ENCODE measurements at regions of chr2 and their contacts with region 1.

Region 1: DNA sequence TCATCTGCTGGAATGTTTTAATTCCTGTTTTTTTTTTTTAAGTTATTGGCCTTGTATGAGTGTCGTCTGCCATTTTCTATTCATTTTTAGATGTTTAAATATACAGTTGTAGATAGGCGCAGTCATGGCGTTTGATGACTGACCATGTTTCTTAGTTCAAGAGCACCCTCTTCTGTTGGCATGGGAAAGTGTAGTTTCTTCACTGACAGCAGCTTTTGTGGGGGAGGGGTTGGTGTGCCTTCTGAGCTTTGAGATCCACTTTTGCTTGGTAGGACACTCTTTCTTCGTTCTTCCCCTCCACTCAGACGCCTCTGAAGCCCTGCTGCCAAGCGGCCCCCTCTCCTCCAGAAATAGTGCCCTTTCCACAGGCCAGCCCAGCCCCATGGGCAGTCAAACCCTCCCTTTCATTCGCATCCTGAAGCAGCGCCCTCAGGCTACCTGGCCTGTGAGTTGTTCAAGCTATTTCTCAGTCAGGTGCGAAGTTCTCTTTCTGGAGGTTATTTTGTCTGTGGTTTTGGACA is 492.0 kb downstream of the TNS1 start:
- DNase-seq: peak; percentile 74
- H3K4me3 ChIP-seq: no peak overlapping the region
- H3K27ac ChIP-seq: no peak overlapping the region
- H3K4me1 ChIP-seq: no peaks in the 10 kb centered on the region
- H3K27me3 ChIP-seq: no peaks in the 10 kb centered on the region
- CTCF ChIP-seq: peak; percentile 64 to 65
- POLR2A ChIP-seq: no peak

Region 2: DNA sequence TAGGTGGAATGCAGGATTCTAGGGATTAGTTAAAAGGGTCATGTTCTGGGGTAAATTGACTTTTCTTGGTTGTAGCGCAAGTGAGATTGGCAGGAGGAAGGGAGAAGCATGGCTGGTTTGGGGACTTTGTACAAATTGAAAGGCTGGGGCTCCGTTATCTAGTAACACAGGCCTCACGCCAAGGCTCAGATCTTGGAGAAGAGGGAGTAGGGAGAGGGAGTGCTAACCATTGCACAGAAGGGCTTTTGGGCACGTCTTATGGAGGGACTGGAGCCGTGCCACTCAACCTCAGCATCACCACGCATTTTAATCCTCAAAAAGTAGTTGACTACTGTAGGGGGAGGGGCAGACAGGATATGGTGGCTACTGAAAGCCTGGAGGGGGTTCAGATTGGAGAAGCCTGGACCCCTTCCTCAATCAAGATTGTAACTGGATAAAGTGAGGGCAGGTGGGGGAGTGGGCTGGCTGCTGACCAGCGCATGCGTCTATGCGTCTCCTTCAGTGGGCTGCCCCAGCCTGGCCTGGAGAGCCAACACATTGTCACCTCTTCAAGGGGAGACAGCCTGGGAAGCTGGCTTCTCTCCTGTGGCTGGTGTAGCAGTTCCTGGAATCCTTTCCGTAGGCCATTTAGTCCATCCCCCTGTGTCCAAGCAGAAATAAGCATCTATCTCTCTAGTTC is 829.7 kb before region 1 on chr2:
- CTCF ChIA-PET with region 1: interaction called, 41 read pairs
- POLR2A ChIA-PET with region 1: no interaction called
- dilution Hi-C with region 1: no loop called
- intact Hi-C with region 1: loop called (anchors 1 kb)
- DNase-seq: no peak
- H3K4me3 ChIP-seq: no peak overlapping the region
- H3K27ac ChIP-seq: no peak overlapping the region
- H3K4me1 ChIP-seq: no peaks in the 10 kb centered on the region
- H3K27me3 ChIP-seq: peaks cover 0 to 13% of the 10 kb centered on the region in 2 experiments
- CTCF ChIP-seq: no peak
- POLR2A ChIP-seq: no peak

Region 3: DNA sequence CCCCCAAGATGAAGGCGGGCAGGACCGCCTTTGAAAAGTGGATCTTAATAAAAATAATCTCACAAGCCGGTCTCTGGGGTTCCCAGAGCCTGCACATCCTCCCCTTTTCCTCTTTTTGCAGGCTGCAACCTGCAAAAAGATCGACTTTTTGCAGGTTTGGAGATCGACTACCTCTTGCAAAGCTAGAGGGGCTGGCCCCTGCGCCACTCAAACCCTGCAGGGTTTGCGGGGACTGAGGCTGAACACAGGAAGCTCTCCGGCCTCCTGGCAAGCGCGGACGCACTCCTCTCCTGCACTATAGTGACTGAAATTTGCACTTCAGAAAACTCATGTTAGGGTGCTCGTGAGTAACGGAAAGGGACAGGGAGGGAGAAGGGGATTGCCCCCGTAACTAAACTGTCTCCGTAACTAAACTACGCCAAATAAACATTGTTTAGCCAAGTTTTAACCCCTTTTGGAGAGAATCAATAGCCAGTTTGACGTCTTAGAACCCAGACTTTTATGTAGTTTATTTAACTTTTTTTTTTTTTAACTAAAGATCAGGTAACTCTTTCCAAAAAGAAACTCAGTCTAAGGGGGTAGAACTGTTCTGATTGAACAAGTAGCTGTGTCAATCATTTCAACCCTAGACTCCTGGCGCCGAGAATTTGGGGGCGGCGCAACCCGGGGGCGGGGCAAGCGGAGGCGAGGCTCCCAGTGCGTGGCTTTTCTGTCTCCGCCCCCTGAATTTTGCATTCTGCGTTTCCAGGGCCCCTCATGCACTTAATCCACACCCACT is 818.0 kb before region 1 on chr2:
- CTCF ChIA-PET with region 1: interaction called, 10 read pairs
- POLR2A ChIA-PET with region 1: no interaction called
- dilution Hi-C with region 1: no loop called
- intact Hi-C with region 1: loop called (anchors 1 kb)
- DNase-seq: peak; percentile 46
- H3K4me3 ChIP-seq: peak overlapping the region; percentile 31 to 55 (median 48)
- H3K27ac ChIP-seq: no peak overlapping the region
- H3K4me1 ChIP-seq: peaks cover 20% of the 10 kb centered on the region
- H3K27me3 ChIP-seq: peaks cover 73 to 76% of the 10 kb centered on the region in 2 experiments
- CTCF ChIP-seq: no peak
- POLR2A ChIP-seq: no peak

Region 4: GRCh38 chr2:216777650-216778273 is 733.1 kb before region 1 on chr2:
- CTCF ChIA-PET with region 1: interaction called, 4 read pairs
- POLR2A ChIA-PET with region 1: no interaction called
- dilution Hi-C with region 1: no loop called
- intact Hi-C with region 1: loop called (anchors 1 kb)
- DNase-seq: peak; percentile 33
- H3K4me3 ChIP-seq: no peak overlapping the region
- H3K27ac ChIP-seq: no peak overlapping the region
- H3K4me1 ChIP-seq: no peaks in the 10 kb centered on the region
- H3K27me3 ChIP-seq: no peaks in the 10 kb centered on the region
- CTCF ChIP-seq: peak; percentile 71 to 80
- POLR2A ChIP-seq: no peak

Region 5: GRCh38 chr2:217040099-217040498 is 470.7 kb before region 1 on chr2:
- CTCF ChIA-PET with region 1: interaction called, 6 read pairs
- POLR2A ChIA-PET with region 1: no interaction called
- dilution Hi-C with region 1: no loop called
- intact Hi-C with region 1: loop called (anchors 5 kb)
- DNase-seq: no peak
- H3K4me3 ChIP-seq: no peak overlapping the region
- H3K27ac ChIP-seq: no peak overlapping the region
- H3K4me1 ChIP-seq: no peaks in the 10 kb centered on the region
- H3K27me3 ChIP-seq: peaks cover 3 to 6% of the 10 kb centered on the region in 2 experiments
- CTCF ChIP-seq: no peak
- POLR2A ChIP-seq: no peak

Region 6: DNA sequence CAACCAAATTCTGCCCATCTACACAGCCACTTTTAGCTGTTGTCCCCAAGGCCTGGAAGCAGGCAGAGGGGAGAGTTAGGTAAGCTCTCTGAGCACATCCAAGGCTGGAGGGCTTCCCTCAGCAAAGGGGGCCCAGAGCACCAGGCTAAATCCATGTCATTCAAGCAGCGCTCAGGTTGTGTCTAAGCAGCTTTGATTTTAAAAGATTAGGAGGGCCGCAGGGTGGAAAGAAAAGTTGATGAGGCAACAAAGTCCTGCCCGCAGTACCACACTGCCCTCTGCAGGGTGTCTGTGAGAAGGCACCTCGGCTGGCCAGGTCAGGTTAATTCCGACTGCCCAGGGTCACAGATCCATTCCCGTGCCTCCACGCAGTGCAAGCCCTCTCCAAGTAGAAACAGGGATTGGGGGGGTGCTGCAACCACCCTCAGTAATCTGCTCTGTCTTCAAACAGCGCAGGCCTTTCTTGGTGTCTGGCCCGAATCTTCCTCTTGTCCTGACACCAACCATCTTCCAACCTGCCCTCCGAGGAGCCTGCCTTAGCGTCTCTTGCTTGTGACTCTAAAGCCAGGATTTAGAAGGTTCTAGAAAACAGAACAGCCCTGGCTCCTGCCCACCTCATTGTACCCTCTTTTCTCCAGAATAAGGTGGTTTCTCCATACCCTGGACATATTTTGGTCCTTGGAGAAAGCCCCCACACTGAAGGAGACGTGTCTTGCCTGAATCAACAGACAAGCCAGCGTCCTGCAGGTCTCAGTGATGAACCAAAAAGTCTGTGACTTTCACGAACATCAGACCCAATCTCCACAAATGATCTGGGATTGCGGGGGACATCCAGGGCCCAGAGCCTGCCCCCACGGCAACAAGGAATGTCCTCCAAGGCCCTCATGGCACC is 202.8 kb after region 1 on chr2:
- CTCF ChIA-PET with region 1: interaction called, 5 read pairs
- POLR2A ChIA-PET with region 1: no interaction called
- dilution Hi-C with region 1: no loop called
- intact Hi-C with region 1: loop called (anchors 2 kb)
- DNase-seq: peak; percentile 55
- H3K4me3 ChIP-seq: no peak overlapping the region
- H3K27ac ChIP-seq: no peak overlapping the region
- H3K4me1 ChIP-seq: no peaks in the 10 kb centered on the region
- H3K27me3 ChIP-seq: peaks cover 0 to 5% of the 10 kb centered on the region in 2 experiments
- CTCF ChIP-seq: peak; percentile 77 to 94
- POLR2A ChIP-seq: no peak